Ovary (tissue), 10 donors: ENCODE measurements at regions of chr18 and their contacts with region 1.

Region 1: GRCh38 chr18:24118750-24119577 is 19.9 kb upstream of the CABYR start:
- DNase-seq: peak; percentile 51 to 79 (median 76)
- H3K4me3 ChIP-seq: no peak overlapping the region
- H3K27ac ChIP-seq: no peak overlapping the region
- H3K4me1 ChIP-seq: no peaks in the 10 kb centered on the region
- H3K27me3 ChIP-seq: no peaks in the 10 kb centered on the region
- CTCF ChIP-seq: peak; percentile 85 to 90 (median 87)
- EP300 ChIP-seq: no peak
- POLR2A ChIP-seq: no peak

Region 2: DNA sequence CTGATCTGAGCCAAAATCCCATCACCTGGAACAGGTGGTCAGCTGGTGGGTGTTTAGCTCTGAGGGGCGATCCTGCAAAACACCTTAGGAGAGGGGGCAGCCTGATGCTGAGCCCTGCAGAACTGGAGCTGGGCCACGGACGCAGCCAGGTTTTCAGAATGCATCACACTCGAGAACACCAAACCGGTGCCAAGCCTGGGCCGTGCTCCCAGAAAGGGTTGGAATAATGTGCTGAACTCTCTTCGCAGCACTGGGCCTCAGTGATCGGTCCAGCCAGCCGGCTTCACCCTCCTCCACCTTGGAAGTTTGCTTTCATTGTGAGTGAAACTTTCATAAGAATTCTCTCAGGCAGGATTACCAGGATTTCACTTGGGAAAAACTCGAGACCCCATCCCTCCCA is 160.9 kb before region 1 on chr18:
- intact Hi-C with region 1: loop called in 1 of 4 experiments (anchors 10 kb)
- DNase-seq: peak; percentile 64 to 88 (median 75)
- H3K4me3 ChIP-seq: no peak overlapping the region
- H3K27ac ChIP-seq: no peak overlapping the region
- H3K4me1 ChIP-seq: no peaks in the 10 kb centered on the region
- H3K27me3 ChIP-seq: no peaks in the 10 kb centered on the region
- CTCF ChIP-seq: no peak
- EP300 ChIP-seq: no peak
- POLR2A ChIP-seq: no peak

Region 3: GRCh38 chr18:24039671-24040070 is 79.3 kb before region 1 on chr18:
- intact Hi-C with region 1: no loop called
- DNase-seq: no peak
- H3K4me3 ChIP-seq: no peak overlapping the region
- H3K27ac ChIP-seq: no peak overlapping the region
- H3K4me1 ChIP-seq: no peaks in the 10 kb centered on the region
- H3K27me3 ChIP-seq: no peaks in the 10 kb centered on the region
- CTCF ChIP-seq: no peak
- EP300 ChIP-seq: no peak
- POLR2A ChIP-seq: no peak

Region 4: GRCh38 chr18:24271381-24272331 is 152.7 kb after region 1 on chr18:
- intact Hi-C with region 1: no loop called
- DNase-seq: peak; percentile 68 to 83 (median 74)
- H3K4me3 ChIP-seq: peak overlapping the region; percentile 57
- H3K27ac ChIP-seq: peak overlapping the region; percentile 89 to 94
- H3K4me1 ChIP-seq: peaks cover 1% of the 10 kb centered on the region
- H3K27me3 ChIP-seq: no peaks in the 10 kb centered on the region
- CTCF ChIP-seq: peak in 1 of 3 donors; percentile 32
- EP300 ChIP-seq: no peak
- POLR2A ChIP-seq: no peak